ENCODE measurements at regions of chr18 and their contacts with region 1.

Region 1: GRCh38 chr18:77733295-77733903 is 483.8 kb downstream of the GALR1 start:
- DNase-seq: no peak
- ATAC-seq: no peak
- H3K4me3 ChIP-seq: no peak overlapping the region
- H3K27ac ChIP-seq: no peak overlapping the region
- H3K4me1 ChIP-seq: no peaks in the 10 kb centered on the region
- H3K27me3 ChIP-seq: peaks cover 0 to 7% (median 0%) of the 10 kb centered on the region in 9 donors
- CTCF ChIP-seq: no peak
- POLR2A ChIP-seq: no peak

Region 2: DNA sequence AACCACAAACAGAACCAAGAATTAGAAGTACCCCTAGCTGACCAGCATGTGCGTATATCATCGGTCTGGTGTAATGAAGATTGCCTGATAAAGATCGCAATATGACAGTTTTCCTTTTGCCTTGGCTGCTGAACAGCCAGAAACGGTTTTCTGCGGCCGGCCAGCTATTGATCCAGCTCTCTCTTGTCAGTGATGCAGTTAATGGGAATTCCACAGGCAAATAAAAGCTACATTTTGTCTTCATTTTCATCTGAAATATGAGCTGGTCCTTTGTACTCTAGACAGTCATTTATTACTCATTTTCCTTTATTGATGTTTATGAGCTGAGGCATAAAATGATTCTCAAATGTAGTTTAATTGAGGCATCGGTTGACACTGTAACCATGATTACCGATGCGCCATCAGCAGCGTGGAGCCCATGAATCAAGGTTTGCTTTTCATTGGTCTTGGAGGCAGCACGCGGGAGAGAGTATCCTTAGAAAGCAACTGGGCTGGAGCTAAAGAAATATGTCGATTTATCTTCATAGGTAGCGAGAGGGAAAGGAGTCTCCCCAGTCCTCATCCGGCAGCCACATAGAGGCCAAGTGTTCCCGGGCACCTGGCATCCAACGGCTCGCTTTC is 51.5 kb after region 1 on chr18:
- intact Hi-C with region 1: loop called in 1 of 10 experiments (anchors 10 kb)
- DNase-seq: no peak
- ATAC-seq: no peak
- H3K4me3 ChIP-seq: no peak overlapping the region
- H3K27ac ChIP-seq: no peak overlapping the region
- H3K4me1 ChIP-seq: no peaks in the 10 kb centered on the region
- H3K27me3 ChIP-seq: peaks cover 0 to 9% (median 0%) of the 10 kb centered on the region in 9 donors
- CTCF ChIP-seq: no peak
- POLR2A ChIP-seq: no peak

Measured in heart left ventricle (tissue), 16 donors.